ENCODE measurements at regions of chr15 and their contacts with region 1.

Region 1: GRCh38 chr15:88467073-88467934 is at the starts of genes MRPL46 and MRPS11:
- DNase-seq: peak; percentile 91
- H3K4me3 Mint-ChIP-seq: peak within 1 kb of the TSS; percentile 96
- H3K27ac Mint-ChIP-seq: peak within 1 kb of the TSS; percentile 98
- H3K4me1 Mint-ChIP-seq: peaks cover 16% of the 10 kb centered on the region
- H3K27me3 Mint-ChIP-seq: no peaks in the 10 kb centered on the region
- CTCF ChIP-seq: no peak
- total RNA-seq, gene MRPL46: 15.4 and 23.2 TPM in 2 replicates
- total RNA-seq, gene MRPS11: 63.9 and 64.5 TPM in 2 replicates

Region 2: GRCh38 chr15:88238618-88239430 is 228.5 kb before region 1 on chr15:
- CTCF ChIA-PET with region 1: no interaction called
- POLR2A ChIA-PET with region 1: no interaction called
- intact Hi-C with region 1: no loop called
- DNase-seq: no peak
- H3K4me3 Mint-ChIP-seq: no peak overlapping the region
- H3K27ac Mint-ChIP-seq: no peak overlapping the region
- H3K4me1 Mint-ChIP-seq: no peaks in the 10 kb centered on the region
- H3K27me3 Mint-ChIP-seq: no peaks in the 10 kb centered on the region
- CTCF ChIP-seq: no peak

Region 3: DNA sequence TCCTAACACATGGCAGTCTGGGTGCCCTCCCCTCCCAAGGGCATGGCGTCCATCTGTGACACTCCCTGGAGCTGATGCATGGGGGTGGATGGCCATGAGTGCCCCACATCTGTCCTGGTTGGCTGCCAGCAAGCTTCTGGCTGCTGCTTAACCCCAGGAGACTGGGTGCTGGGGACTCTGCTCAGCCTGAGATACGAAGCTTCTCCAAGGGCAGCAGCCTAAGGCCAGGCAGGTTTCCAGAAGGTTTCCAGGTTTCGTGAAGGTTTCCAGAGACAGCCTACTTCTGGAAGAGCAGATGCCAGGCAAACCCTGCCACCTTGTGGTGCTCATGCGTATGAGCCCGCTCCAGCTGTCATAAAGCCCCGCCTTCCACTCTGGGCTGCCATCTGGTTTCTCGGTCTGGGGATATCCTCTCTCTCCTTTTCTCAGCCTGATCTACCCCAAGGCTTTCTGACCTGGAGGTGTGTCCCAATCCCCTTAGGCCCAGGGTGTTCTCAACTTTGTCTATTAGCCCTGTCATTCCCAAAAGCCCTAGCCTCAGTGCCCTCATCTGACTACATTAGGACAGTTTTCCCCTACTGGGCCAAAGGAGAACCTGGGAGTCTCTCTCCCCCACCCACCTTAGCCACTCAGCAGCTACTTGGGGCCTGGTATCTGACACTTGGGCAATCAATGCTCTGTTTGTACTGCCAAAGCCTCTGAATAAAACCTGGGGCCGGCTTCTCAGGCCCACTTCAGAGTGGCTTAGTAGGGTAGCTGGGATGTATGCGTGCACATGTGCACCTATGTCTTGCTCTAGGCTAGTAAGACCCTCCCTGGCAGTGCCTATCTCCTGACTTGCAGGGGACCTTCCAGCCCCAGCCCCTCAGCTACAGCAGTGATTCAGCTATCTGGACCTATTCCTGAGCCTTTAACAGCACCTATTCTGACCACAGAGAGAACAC is 12.2 kb before region 1 on chr15:
- CTCF ChIA-PET with region 1: interaction called, 40 read pairs
- POLR2A ChIA-PET with region 1: interaction called, 5 read pairs
- intact Hi-C with region 1: no loop called
- DNase-seq: peak; percentile 73
- H3K4me3 Mint-ChIP-seq: no peak overlapping the region
- H3K27ac Mint-ChIP-seq: no peak overlapping the region
- H3K4me1 Mint-ChIP-seq: peaks cover 1% of the 10 kb centered on the region
- H3K27me3 Mint-ChIP-seq: no peaks in the 10 kb centered on the region
- CTCF ChIP-seq: peak; percentile 58

Region 4: GRCh38 chr15:88546248-88547129 is 79.2 kb after region 1 on chr15 and contains the start of gene DET1:
- CTCF ChIA-PET with region 1: no interaction called
- POLR2A ChIA-PET with region 1: no interaction called
- intact Hi-C with region 1: loop called (anchors 5 kb)
- DNase-seq: peak; percentile 96
- H3K4me3 Mint-ChIP-seq: peak within 1 kb of the TSS; percentile 79
- H3K27ac Mint-ChIP-seq: peak within 1 kb of the TSS; percentile 78
- H3K4me1 Mint-ChIP-seq: no peaks in the 10 kb centered on the region
- H3K27me3 Mint-ChIP-seq: no peaks in the 10 kb centered on the region
- CTCF ChIP-seq: peak; percentile 45
- total RNA-seq, gene DET1: 5.1 and 7.6 TPM in 2 replicates

Region 5: GRCh38 chr15:88610701-88611231 is 143.5 kb after region 1 on chr15:
- CTCF ChIA-PET with region 1: interaction called, 11 read pairs
- POLR2A ChIA-PET with region 1: no interaction called
- intact Hi-C with region 1: no loop called
- DNase-seq: no peak
- H3K4me3 Mint-ChIP-seq: no peak overlapping the region
- H3K27ac Mint-ChIP-seq: no peak overlapping the region
- H3K4me1 Mint-ChIP-seq: no peaks in the 10 kb centered on the region
- H3K27me3 Mint-ChIP-seq: peaks cover 59% of the 10 kb centered on the region
- CTCF ChIP-seq: no peak

Region 6: DNA sequence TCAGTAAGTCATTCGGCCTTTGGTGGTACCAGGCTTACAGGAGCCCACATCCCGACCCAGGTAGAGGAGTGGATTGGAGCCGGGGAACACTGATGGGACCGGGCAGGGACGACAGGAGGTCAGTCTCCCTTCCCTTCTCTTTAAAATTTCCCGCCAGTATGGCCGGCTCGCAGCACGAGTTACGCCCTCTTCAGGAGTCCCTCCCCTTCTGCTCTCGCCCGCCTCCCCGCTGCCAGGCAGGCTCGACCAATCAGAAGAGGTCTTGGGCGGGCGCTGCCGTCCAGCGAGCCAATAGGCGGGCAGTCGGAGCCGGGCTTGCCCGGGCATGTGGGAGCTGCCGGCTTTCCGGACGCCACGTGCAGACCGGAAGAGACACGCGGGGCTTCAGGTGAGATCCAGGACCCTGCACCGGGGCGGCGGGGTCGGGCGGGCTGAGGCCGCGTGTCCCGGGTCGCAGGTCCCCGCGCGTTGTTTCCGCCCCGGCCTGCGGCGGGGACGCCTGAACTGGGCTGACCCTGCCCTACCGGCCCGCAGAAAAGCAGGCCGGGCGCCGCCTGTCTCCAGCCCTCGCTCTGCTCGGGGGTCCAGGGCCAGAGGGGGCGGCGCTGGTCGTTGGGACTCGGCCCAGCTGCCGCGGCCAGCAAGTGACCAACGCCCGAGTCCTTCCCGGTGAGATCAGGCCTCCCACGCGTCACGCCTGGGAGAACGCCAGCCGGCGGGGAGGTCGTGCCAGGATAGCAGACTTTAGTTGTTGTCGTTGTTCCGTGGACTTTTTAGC is 153.9 kb after region 1 on chr15 and contains the start of gene AEN:
- CTCF ChIA-PET with region 1: interaction called, 11 read pairs
- POLR2A ChIA-PET with region 1: no interaction called
- intact Hi-C with region 1: loop called (anchors 5 kb)
- DNase-seq: peak; percentile 95
- H3K4me3 Mint-ChIP-seq: peak within 1 kb of the TSS; percentile 87
- H3K27ac Mint-ChIP-seq: peak within 1 kb of the TSS; percentile 81
- H3K4me1 Mint-ChIP-seq: peaks cover 25% of the 10 kb centered on the region
- H3K27me3 Mint-ChIP-seq: no peaks in the 10 kb centered on the region
- CTCF ChIP-seq: no peak
- total RNA-seq, gene AEN: 48.7 and 67.6 TPM in 2 replicates

Measured in MCF 10A (cell line).